ENCODE measurements at regions of chr6 and their contacts with region 1.

Region 1: DNA sequence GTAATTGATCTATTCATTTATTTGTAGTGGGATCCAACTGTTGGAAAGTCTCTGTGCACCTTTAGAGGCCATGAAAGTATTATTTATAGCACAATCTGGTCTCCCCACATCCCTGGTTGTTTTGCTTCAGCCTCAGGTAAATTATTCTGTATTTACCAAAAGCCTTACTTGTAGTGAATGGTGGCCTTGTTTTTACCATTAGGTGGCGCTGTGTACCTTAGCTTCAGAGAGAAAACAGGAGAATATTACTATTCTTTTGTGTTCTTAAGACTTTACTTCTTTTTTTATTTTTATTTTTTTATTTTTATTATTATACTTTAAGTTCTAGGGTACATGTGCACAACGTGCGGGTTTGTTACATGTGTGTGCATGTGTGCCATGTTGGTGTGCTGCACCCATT is 23.7 kb downstream of the PEX7 start:
- DNase-seq: peak; percentile 37
- CTCF ChIP-seq: peak; percentile 61

Region 2: DNA sequence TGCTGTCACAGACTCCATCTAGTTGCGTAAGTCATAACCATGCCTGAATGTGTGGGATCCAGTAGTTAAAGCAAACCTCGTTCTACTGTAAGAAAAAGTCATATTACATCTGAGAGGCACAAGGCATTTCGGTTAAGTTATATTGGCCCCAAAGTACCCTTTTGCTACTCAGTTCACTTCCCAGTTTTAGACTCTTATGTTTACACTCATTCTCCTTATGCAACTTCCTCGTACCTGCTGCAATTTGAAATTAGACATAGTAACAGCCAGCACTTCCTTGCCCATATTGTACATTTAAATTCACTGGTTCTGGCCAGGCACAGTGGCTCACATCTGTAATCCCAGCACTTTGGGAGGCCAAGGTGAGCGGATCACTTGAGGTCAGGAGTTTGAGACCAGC is 13.4 kb after region 1 on chr6:
- CTCF ChIA-PET with region 1: interaction called, 17 read pairs
- POLR2A ChIA-PET with region 1: no interaction called
- DNase-seq: no peak
- CTCF ChIP-seq: no peak

Measured in GM10248 (cell line).